GM12878 (cell line): ENCODE measurements at regions of chr16 and their contacts with region 1.

Region 1: GRCh38 chr16:10981697-10982216 is 37.4 kb downstream of the CLEC16A start:
- DNase-seq: no peak
- ATAC-seq: peak; percentile 94
- H3K4me3 ChIP-seq: no peak overlapping the region
- H3K27ac ChIP-seq: peak overlapping the region; percentile 55; the same call in 1 of the 2 replicates
- H3K4me1 ChIP-seq: peaks cover 20% of the 10 kb centered on the region
- H3K27me3 ChIP-seq: no peaks in the 10 kb centered on the region
- CTCF ChIP-seq: peak; percentile 78 to 85 (median 80)
- EP300 ChIP-seq: peak in 1 of 2 experiments; percentile 64; a peak in 1 of 4 replicates
- POLR2A ChIP-seq: no peak
- RAD21 ChIP-seq: peak; percentile 54

Region 2: DNA sequence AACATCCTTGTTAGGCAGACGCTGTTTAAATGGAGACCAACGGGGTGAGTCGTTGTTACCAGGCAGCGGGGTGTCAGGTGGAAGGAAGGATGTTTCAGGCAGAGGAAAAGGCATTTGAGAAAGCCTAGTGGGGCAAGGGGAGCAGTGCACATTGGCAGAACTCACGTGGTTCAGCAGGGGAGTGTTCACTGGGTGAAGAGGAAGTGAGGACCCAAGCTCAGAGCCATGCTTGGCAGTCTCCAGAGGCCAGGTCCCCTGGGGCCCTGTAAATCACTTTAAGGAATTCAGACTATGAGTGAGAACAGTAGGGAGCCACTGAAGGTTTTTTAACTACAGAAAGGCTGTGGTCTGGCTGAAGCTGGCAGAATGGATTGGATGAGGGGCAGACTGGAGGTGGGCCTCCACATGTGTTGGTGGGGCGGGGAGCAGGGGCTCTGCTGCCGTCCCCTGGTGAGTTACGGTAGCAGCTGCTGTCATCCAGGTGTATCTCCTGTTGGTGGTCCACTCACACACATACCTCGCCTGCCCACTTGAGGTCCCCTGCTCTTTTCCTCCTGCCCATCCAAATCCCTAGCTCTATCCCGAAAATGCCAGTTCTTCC is 32.3 kb before region 1 on chr16:
- CTCF ChIA-PET with region 1: interaction called, 22 read pairs
- POLR2A ChIA-PET with region 1: interaction called, 9 read pairs
- RAD21 ChIA-PET with region 1: interaction called, 11 read pairs
- SMC1A ChIA-PET with region 1: interaction called, 10 read pairs
- in situ Hi-C with region 1: no loop called
- intact Hi-C with region 1: no loop called
- DNase-seq: peak; percentile 91
- ATAC-seq: peak; percentile 83
- H3K4me3 ChIP-seq: peak overlapping the region; percentile 28; the same call in 1 of the 2 replicates
- H3K27ac ChIP-seq: peak overlapping the region; percentile 62
- H3K4me1 ChIP-seq: peaks cover 27% of the 10 kb centered on the region
- H3K27me3 ChIP-seq: no peaks in the 10 kb centered on the region
- CTCF ChIP-seq: peak; percentile 34 to 55 (median 49); a peak in 2 of 6 replicates
- EP300 ChIP-seq: peak; percentile 9 to 33; a peak in 1 of 4 replicates
- POLR2A ChIP-seq: no peak
- RAD21 ChIP-seq: no peak

Region 3: DNA sequence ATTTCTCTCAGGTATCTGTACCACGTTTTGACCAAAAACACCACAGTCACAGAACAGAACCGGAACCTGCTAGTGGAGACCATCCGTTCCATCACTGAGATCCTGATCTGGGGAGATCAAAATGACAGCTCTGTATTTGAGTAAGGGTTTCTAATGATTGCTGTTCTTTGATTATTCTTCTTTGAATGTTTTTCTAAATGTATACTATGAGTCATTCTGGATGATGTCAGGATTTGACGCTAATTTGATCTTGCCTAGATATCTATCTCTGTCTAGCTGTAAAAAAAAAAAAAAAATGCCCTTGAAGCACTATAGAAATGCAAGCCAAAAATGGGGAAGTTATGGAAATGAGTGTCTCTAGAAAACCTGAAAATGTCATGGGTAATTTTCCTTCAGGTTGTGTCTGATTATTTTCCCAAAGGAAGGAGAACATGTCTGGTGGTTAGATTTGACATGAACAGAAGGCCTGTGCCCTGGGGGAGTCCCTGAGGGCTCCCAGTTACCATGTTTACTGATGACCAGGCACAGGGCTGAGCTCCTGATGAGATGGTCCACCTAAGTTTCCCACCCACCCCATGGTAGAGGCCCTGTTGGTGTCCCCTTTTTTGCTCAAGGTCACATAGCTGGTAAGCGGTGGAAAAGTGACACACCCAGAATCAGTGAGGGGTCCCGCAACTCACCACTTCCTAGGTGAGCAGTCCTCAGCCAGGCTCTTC is 23.8 kb before region 1 on chr16:
- CTCF ChIA-PET with region 1: interaction called, 61 read pairs
- POLR2A ChIA-PET with region 1: no interaction called
- RAD21 ChIA-PET with region 1: interaction called, 7 read pairs
- SMC1A ChIA-PET with region 1: interaction called, 48 read pairs
- in situ Hi-C with region 1: no loop called
- intact Hi-C with region 1: no loop called
- DNase-seq: no peak
- ATAC-seq: peak; percentile 75
- H3K4me3 ChIP-seq: no peak overlapping the region
- H3K27ac ChIP-seq: peak overlapping the region; percentile 70
- H3K4me1 ChIP-seq: peaks cover 34% of the 10 kb centered on the region
- H3K27me3 ChIP-seq: no peaks in the 10 kb centered on the region
- CTCF ChIP-seq: no peak
- EP300 ChIP-seq: peak; percentile 30 to 47; a peak in 2 of 4 replicates
- POLR2A ChIP-seq: no peak
- RAD21 ChIP-seq: no peak

Region 4: GRCh38 chr16:10971560-10971961 is 10.2 kb before region 1 on chr16:
- CTCF ChIA-PET with region 1: interaction called, 61 read pairs
- POLR2A ChIA-PET with region 1: no interaction called
- RAD21 ChIA-PET with region 1: interaction called, 47 read pairs
- SMC1A ChIA-PET with region 1: interaction called, 48 read pairs
- in situ Hi-C with region 1: no loop called
- intact Hi-C with region 1: loop called (anchors 1 kb)
- DNase-seq: no peak
- ATAC-seq: peak; percentile 68
- H3K4me3 ChIP-seq: no peak overlapping the region
- H3K27ac ChIP-seq: no peak overlapping the region
- H3K4me1 ChIP-seq: peaks cover 4% of the 10 kb centered on the region
- H3K27me3 ChIP-seq: no peaks in the 10 kb centered on the region
- CTCF ChIP-seq: peak; percentile 48 to 83 (median 68)
- EP300 ChIP-seq: no peak
- POLR2A ChIP-seq: no peak
- RAD21 ChIP-seq: peak; percentile 82

Region 5: DNA sequence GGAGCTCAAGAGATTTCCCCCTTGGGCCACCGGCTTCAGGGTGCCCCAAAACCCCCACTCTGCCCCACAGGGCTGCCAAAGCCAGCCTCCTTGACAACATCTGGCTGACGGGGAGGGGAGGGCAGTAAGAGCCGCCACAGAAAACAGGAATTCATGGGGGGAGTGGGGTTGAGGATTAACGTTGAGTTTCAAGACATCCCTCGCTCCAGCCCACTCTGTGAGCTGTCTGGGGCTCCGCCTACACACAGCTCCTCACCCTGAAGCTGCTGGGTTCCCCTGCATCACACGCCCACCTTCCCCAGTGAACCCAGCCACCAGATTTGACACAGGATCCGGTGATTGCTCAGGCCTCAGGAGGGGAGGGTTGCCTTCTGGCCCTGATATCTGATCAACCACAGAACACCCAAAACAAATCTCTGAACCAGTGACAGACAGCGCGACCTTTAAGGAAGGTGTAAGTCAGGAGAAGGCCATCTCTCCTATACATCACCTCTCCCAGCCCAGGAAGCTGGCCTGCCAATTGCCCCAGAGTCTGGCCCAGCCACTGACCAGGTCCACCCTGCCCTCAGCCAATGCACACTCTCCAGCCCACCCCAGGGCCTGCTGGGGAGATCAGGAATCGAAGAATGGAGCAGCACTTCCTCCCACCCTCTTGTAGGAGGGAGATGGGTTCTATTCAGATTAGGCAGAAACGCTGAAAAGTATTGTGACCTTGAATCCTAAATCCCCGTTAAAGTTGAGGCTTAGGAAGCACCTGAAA is 94.7 kb after region 1 on chr16:
- CTCF ChIA-PET with region 1: interaction called, 15 read pairs
- POLR2A ChIA-PET with region 1: interaction called, 4 read pairs
- RAD21 ChIA-PET with region 1: interaction called, 9 read pairs
- SMC1A ChIA-PET with region 1: interaction called, 15 read pairs
- in situ Hi-C with region 1: no loop called
- intact Hi-C with region 1: loop called (anchors 5 kb)
- DNase-seq: peak; percentile 79
- ATAC-seq: peak; percentile 64
- H3K4me3 ChIP-seq: no peak overlapping the region
- H3K27ac ChIP-seq: peak overlapping the region; percentile 65
- H3K4me1 ChIP-seq: peaks cover 46% of the 10 kb centered on the region
- H3K27me3 ChIP-seq: no peaks in the 10 kb centered on the region
- CTCF ChIP-seq: no peak
- EP300 ChIP-seq: 0 out of 4 replicates have a peak, but pooled peaks of 1 of the 2 experiments have one; percentile 10
- POLR2A ChIP-seq: no peak
- RAD21 ChIP-seq: no peak